Natural killer cell (primary cell): ENCODE measurements at regions of chr13 and their contacts with region 1.

Region 1: DNA sequence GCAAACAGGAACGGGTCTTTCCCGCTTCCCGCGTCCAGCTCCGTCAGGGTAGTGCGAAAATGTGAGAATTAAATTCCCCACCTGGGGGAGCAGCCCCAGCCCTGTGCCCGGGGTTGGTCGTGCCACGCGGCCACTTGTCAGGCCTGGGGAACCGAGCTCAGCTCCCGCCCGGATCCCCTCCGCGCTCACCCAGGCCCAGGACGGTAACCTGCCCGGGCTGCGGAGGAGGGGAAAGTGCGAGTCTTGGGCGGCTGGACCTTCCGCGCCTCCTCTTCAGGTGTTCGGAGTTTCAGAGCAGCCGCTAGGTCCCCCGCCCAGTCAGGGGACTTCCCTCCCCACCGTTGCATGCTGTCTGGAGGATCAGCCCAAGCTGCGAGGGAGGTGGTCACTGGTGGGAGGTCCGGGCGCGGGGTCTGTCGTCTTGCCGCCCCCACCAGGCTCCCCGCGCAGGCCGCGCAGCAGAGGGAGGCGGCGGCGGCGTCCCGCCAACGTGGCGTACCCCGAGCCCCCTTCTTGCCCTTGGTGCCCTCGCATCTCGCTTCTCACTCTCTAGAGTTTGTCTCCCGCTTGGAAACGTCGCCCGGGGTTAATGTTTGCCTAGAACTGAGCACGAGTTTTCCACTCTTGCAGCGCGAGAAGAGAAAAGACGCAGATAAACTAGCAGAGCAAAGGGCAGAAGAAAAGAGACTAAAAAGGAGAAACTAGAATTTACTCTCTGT is 8.1 kb downstream of the URAD start:
- DNase-seq: no peak
- ATAC-seq: no peak
- H3K4me3 ChIP-seq: no peak overlapping the region
- H3K4me3 Mint-ChIP-seq: no peak overlapping the region
- H3K27ac ChIP-seq: no peak overlapping the region
- H3K27ac Mint-ChIP-seq: no peak overlapping the region
- H3K4me1 ChIP-seq: peaks cover 13% of the 10 kb centered on the region
- H3K4me1 Mint-ChIP-seq: no peaks in the 10 kb centered on the region
- H3K27me3 ChIP-seq: peaks cover 36% of the 10 kb centered on the region
- H3K27me3 Mint-ChIP-seq: peaks cover 61 to 67% of the 10 kb centered on the region in 2 donors
- CTCF ChIP-seq: no peak

Region 2: GRCh38 chr13:27362064-27362883 is 618.2 kb before region 1 on chr13:
- intact Hi-C with region 1: loop called (anchors 1 kb)
- DNase-seq: peak; percentile 77 to 88
- ATAC-seq: peak; percentile 95 to 98 (median 98)
- H3K4me3 ChIP-seq: peak overlapping the region; percentile 31
- H3K4me3 Mint-ChIP-seq: peak overlapping the region; percentile 53
- H3K27ac ChIP-seq: no peak overlapping the region
- H3K27ac Mint-ChIP-seq: no peak overlapping the region
- H3K4me1 ChIP-seq: peaks cover 12% of the 10 kb centered on the region
- H3K4me1 Mint-ChIP-seq: peaks cover 0 to 12% of the 10 kb centered on the region in 2 donors
- H3K27me3 ChIP-seq: peaks cover 4% of the 10 kb centered on the region
- H3K27me3 Mint-ChIP-seq: peaks cover 9 to 23% of the 10 kb centered on the region in 2 donors
- CTCF ChIP-seq: peak; percentile 76

Region 3: DNA sequence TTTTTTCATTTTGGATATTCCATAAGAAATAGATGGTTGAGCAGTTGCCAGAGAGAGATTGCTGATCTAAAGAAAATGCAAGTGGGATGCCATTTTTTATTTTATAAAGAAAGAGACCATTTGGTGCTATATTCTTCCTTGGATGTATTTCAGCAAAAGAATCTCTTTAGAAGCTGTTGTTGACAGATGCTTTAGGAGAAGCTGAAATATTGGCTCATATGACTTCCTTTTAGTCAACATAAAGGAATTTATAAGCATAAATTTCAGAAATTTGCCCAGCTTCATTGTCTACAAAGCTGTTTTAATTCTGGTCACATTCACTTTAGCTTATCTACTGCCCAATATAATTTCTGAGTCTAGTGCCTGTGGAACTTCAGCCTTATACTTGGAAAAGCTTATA is 321.9 kb before region 1 on chr13:
- intact Hi-C with region 1: no loop called
- DNase-seq: no peak
- ATAC-seq: no peak
- H3K4me3 ChIP-seq: no peak overlapping the region
- H3K4me3 Mint-ChIP-seq: no peak overlapping the region
- H3K27ac ChIP-seq: no peak overlapping the region
- H3K27ac Mint-ChIP-seq: no peak overlapping the region
- H3K4me1 ChIP-seq: no peaks in the 10 kb centered on the region
- H3K4me1 Mint-ChIP-seq: peaks cover 16 to 24% of the 10 kb centered on the region in 2 donors
- H3K27me3 ChIP-seq: no peaks in the 10 kb centered on the region
- H3K27me3 Mint-ChIP-seq: no peaks in the 10 kb centered on the region
- CTCF ChIP-seq: no peak

Region 4: GRCh38 chr13:28093881-28094280 is 113.4 kb after region 1 on chr13:
- intact Hi-C with region 1: no loop called
- DNase-seq: no peak
- ATAC-seq: no peak
- H3K4me3 ChIP-seq: no peak overlapping the region
- H3K4me3 Mint-ChIP-seq: no peak overlapping the region
- H3K27ac ChIP-seq: no peak overlapping the region
- H3K27ac Mint-ChIP-seq: no peak overlapping the region
- H3K4me1 ChIP-seq: no peaks in the 10 kb centered on the region
- H3K4me1 Mint-ChIP-seq: no peaks in the 10 kb centered on the region
- H3K27me3 ChIP-seq: peaks cover 15% of the 10 kb centered on the region
- H3K27me3 Mint-ChIP-seq: peaks cover 28 to 42% of the 10 kb centered on the region in 2 donors
- CTCF ChIP-seq: no peak